Activated CD4-positive, alpha-beta T cell treated with anti-CD3 and anti-CD28 coated beads for 36 hours (primary cell): ENCODE measurements at regions of chr12 and their contacts with region 1.

Region 1: DNA sequence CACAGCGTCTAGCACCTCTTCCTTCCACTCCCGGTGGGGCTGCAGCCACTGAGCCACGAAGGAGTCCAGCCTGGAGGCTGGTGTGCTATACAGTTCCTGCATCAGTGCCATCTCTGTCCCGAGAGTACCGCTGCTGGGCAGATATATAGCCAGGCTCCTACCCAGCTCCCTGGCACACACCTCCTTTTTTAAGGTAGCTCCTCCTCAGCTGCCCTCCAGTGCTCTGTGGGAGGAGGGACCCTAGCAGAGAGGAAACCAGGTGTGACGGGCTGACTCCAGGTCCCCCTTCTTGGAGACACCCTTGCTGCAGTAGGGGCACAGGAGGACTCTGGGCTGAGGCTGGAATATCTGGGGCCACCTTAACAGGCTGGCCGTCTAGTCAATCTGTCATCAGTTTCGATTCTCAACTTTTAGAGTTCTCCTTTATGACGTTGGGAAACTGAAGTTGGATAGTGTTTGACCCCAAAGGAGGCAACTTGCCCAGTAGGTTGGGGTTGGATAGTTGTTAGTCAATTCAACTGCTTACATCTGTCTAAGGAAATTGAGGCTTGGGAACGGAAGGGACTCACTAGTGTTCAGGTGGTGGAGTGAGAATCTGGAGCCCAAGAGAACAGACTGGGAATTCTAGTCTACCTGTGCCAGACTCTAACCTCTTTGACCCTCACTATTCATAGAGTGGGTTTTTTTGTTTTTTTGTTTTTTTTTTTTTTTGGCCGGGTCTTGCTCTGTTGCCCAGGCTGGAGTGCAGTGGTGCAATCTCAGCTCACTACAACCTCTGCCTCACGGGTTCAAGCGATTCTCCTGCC is at the start of gene OASL:
- DNase-seq: peak; percentile 72
- ATAC-seq: peak; percentile 58
- H3K4me3 Mint-ChIP-seq: peak within 1 kb of the TSS; percentile 78
- H3K27ac Mint-ChIP-seq: peak within 1 kb of the TSS; percentile 91
- H3K4me1 Mint-ChIP-seq: peaks cover 52% of the 10 kb centered on the region
- H3K27me3 Mint-ChIP-seq: peaks cover 14% of the 10 kb centered on the region
- total RNA-seq, gene OASL: 13.9 to 19.6 TPM

Region 2: DNA sequence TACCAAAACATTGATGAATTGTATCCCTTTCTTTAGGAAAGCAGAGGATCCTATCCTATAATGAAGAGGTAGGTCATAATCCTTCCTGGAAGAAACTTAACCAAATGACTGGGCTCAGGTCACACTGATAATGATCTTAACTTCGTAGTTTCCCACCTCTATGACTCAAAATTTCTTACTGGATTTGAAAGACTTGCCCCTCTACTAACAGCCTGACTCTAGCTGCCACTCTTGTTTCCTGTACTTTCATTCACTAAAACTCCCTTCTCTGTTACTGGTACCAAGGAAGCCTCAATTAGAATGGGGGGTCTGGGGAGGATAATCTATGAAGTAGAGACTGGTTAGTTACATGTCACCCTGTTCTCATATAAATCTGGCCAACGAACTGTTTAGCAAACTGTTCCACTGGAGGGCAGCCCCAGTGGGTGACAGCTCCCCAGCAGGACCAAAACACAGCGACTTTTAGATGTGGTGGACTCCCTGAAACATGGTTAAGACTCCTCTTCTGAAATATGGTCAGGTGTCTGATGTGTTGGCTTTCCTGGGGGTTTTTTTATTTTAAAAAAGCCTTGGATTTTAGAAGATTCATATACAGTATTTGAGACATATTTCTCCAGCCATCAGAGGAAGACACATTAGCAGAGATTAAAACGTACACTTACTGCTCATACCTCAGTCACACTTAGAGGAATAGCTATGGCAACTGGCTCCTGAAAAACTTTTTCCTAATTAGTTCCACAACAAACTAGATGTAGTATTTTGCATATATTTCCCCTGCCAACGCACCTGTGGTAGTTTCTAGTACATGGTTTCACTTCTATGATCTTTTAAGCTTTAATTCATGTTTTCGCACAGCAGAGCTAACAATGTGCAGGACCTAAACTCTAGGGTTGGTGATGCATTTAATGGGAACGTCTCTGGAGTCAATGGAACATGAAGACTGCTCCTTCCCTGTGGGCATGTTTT is 241.1 kb before region 1 on chr12:
- CTCF ChIA-PET with region 1: interaction called, 3 read pairs
- POLR2A ChIA-PET with region 1: no interaction called
- intact Hi-C with region 1: loop called in 1 of 2 experiments (anchors 5 kb)
- DNase-seq: peak; percentile 30
- ATAC-seq: peak; percentile 76
- H3K4me3 Mint-ChIP-seq: no peak overlapping the region
- H3K27ac Mint-ChIP-seq: peak overlapping the region; percentile 83
- H3K4me1 Mint-ChIP-seq: peaks cover 65% of the 10 kb centered on the region
- H3K27me3 Mint-ChIP-seq: no peaks in the 10 kb centered on the region

Region 3: GRCh38 chr12:121209624-121210572 is 170.8 kb after region 1 on chr12 and contains the start of gene P2RX4:
- CTCF ChIA-PET with region 1: no interaction called
- POLR2A ChIA-PET with region 1: no interaction called
- intact Hi-C with region 1: loop called (anchors 2 to 5 kb)
- DNase-seq: peak; percentile 93
- ATAC-seq: peak; percentile 79
- H3K4me3 Mint-ChIP-seq: peak within 1 kb of the TSS; percentile 79
- H3K27ac Mint-ChIP-seq: peak within 1 kb of the TSS; percentile 89
- H3K4me1 Mint-ChIP-seq: peaks cover 31% of the 10 kb centered on the region
- H3K27me3 Mint-ChIP-seq: no peaks in the 10 kb centered on the region
- total RNA-seq, gene P2RX4: 21.2 to 21.6 TPM

Region 4: GRCh38 chr12:121214855-121215745 is 176.0 kb after region 1 on chr12:
- CTCF ChIA-PET with region 1: no interaction called
- POLR2A ChIA-PET with region 1: no interaction called
- intact Hi-C with region 1: loop called (anchors 2 to 5 kb)
- DNase-seq: no peak
- ATAC-seq: peak; percentile 20
- H3K4me3 Mint-ChIP-seq: peak overlapping the region; percentile 11
- H3K27ac Mint-ChIP-seq: peak overlapping the region; percentile 79
- H3K4me1 Mint-ChIP-seq: peaks cover 39% of the 10 kb centered on the region
- H3K27me3 Mint-ChIP-seq: no peaks in the 10 kb centered on the region

Region 5: DNA sequence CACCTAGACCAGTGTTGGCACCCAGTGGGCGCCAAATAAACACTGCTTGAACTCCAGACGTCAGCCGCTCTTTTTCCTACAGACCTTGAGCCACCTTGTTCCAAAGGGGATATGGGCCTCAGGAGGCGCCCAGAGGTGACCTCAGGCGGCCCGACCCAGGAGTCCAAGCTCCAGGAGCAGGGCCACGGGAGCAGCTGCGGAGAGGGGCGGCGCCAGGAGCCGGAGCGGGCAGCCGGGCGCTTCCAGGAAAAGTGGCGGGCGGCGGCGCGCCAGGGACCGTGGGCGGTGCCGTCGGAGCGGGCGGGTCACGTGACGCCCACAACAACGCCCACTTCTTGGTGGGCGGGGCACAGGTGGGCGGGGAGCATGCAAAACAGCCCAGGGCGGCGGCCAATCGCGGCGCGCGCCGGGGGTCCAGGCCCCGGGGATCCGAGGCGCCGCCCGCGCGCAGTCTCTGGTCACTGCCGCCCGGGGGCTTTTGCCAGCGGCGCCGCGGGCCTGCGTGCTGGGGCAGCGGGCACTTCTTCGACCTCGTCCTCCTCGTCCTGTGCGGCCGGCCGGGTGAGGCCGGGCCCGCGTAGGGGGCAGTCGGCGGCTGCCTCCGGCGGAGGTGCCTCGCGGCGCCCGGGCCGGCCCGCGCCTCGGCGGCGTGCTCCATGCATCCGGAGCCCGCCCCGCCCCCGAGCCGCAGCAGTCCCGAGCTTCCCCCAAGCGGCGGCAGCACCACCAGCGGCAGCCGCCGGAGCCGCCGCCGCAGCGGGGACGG is 587.2 kb after region 1 on chr12 and contains the start of gene ORAI1:
- CTCF ChIA-PET with region 1: no interaction called
- POLR2A ChIA-PET with region 1: no interaction called
- intact Hi-C with region 1: no loop called
- DNase-seq: peak; percentile 98
- ATAC-seq: peak; percentile 50
- H3K4me3 Mint-ChIP-seq: peak within 1 kb of the TSS; percentile 92
- H3K27ac Mint-ChIP-seq: peak within 1 kb of the TSS; percentile 99
- H3K4me1 Mint-ChIP-seq: peaks cover 36% of the 10 kb centered on the region
- H3K27me3 Mint-ChIP-seq: no peaks in the 10 kb centered on the region
- total RNA-seq, gene ORAI1: 29.4 to 35.9 TPM